Caco-2 (cell line): ENCODE measurements at regions of chr1 and their contacts with region 1.

Region 1: DNA sequence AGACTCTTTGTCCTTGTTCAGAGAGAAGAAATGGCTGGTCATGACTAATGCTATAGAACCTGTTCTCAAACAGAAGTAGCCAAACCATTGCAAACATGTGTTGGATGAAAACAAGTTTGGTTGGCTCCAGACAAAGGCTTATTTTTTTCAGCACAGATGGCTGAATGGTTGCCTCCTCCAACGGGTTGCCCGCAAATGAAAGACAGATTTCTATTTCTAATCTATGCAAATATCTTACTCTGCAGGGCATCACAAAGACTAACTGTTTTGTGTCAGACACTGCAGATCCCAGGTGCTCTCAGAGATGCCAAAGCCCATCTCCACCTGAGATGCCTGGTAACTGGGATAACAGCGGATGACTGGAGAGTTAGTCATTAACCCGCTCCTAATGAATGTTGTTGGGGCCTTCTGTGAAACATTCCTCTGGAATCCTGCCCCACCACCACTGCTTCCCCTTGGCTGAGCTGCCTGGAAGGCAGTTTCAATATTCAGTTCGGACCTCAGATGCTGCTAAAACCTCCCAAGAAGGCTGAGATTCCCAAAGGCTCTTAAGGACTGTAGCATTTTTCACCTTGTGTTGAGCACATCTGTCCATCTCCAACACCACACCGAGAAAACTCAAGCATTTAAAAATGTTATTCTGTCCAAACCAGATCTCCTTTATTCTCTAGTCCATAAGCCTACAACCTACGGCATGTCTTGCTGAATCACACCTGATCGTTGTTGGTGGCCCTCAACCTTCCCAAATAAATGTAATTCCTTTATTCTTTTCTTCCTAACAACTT is 104.4 kb downstream of the PTPN14 start:
- DNase-seq: peak; percentile 87 to 89
- H3K4me3 ChIP-seq: peak overlapping the region; percentile 23
- H3K4me3 Mint-ChIP-seq: peak overlapping the region; percentile 65
- H3K27ac Mint-ChIP-seq: peak overlapping the region; percentile 91
- H3K4me1 ChIP-seq: peaks cover 58% of the 10 kb centered on the region
- H3K4me1 Mint-ChIP-seq: peaks cover 44% of the 10 kb centered on the region
- H3K27me3 ChIP-seq: no peaks in the 10 kb centered on the region
- H3K27me3 Mint-ChIP-seq: no peaks in the 10 kb centered on the region
- CTCF ChIP-seq: no peak

Region 2: GRCh38 chr1:214404154-214404553 is 42.8 kb before region 1 on chr1:
- CTCF ChIA-PET with region 1: no interaction called
- POLR2A ChIA-PET with region 1: no interaction called
- intact Hi-C with region 1: loop called (anchors 1 kb)
- DNase-seq: no peak
- H3K4me3 ChIP-seq: no peak overlapping the region
- H3K4me3 Mint-ChIP-seq: peak overlapping the region; percentile 10
- H3K27ac Mint-ChIP-seq: peak overlapping the region; percentile 36
- H3K4me1 ChIP-seq: peaks cover 33% of the 10 kb centered on the region
- H3K4me1 Mint-ChIP-seq: peaks cover 15% of the 10 kb centered on the region
- H3K27me3 ChIP-seq: no peaks in the 10 kb centered on the region
- H3K27me3 Mint-ChIP-seq: no peaks in the 10 kb centered on the region
- CTCF ChIP-seq: no peak

Region 3: DNA sequence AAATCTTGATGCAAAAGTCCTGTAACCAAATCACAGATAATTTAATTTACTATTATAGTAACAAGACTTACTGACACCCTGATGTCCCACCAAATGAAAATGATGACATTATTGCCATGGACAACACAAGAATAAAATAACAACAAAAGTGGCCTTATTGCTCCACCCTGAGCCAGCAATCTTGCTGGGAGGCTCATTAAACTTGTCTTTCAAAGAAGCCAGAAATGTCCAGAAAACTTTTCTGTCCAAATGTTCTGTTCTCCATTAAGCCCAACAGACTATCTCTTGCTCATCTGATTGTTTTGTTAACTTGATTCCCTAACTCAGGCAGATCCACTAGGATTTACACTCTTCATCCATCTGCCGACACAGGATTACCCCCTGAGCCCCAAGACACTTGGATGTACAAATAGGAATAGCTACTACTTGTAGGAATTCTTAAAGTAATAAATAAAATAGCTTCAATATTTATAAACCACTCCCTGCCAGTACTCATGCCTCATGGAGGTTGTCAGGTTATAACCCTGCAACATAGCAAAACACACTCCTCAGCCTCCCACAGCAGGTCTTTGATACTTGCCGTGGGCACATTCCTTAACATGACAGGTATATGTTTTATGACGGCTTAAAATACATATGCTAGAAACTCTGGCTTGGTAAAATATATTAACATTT is 19.6 kb after region 1 on chr1:
- CTCF ChIA-PET with region 1: no interaction called
- POLR2A ChIA-PET with region 1: no interaction called
- intact Hi-C with region 1: loop called (anchors 2 kb)
- DNase-seq: peak in 1 of 2 experiments; percentile 33
- H3K4me3 ChIP-seq: no peak overlapping the region
- H3K4me3 Mint-ChIP-seq: peak overlapping the region; percentile 29
- H3K27ac Mint-ChIP-seq: peak overlapping the region; percentile 77
- H3K4me1 ChIP-seq: peaks cover 32% of the 10 kb centered on the region
- H3K4me1 Mint-ChIP-seq: peaks cover 57% of the 10 kb centered on the region
- H3K27me3 ChIP-seq: no peaks in the 10 kb centered on the region
- H3K27me3 Mint-ChIP-seq: no peaks in the 10 kb centered on the region
- CTCF ChIP-seq: no peak

Region 4: DNA sequence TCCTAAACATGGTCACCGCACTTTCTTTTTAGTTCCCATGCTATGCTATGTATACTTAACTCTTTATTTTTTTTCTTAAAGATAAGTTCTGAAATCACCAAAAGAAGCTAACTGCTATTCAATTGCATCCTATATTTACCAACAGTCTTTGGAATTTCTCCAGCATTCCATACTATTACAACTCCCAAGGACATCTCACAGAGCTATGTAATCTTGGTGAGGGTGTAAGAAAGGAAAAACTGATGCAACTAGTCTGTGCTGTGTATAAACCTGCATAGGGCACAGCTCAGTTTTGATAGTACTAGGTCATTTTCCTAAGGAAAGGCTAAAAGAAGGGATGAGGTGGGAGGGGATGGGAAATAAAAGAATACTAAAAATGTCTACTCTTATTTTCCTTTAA is 26.4 kb after region 1 on chr1:
- CTCF ChIA-PET with region 1: no interaction called
- POLR2A ChIA-PET with region 1: interaction called, 3 read pairs
- intact Hi-C with region 1: loop called (anchors 1 kb)
- DNase-seq: peak in 1 of 2 experiments; percentile 40
- H3K4me3 ChIP-seq: no peak overlapping the region
- H3K4me3 Mint-ChIP-seq: peak overlapping the region; percentile 31
- H3K27ac Mint-ChIP-seq: peak overlapping the region; percentile 80
- H3K4me1 ChIP-seq: peaks cover 82% of the 10 kb centered on the region
- H3K4me1 Mint-ChIP-seq: peaks cover 62% of the 10 kb centered on the region
- H3K27me3 ChIP-seq: no peaks in the 10 kb centered on the region
- H3K27me3 Mint-ChIP-seq: no peaks in the 10 kb centered on the region
- CTCF ChIP-seq: no peak

Region 5: DNA sequence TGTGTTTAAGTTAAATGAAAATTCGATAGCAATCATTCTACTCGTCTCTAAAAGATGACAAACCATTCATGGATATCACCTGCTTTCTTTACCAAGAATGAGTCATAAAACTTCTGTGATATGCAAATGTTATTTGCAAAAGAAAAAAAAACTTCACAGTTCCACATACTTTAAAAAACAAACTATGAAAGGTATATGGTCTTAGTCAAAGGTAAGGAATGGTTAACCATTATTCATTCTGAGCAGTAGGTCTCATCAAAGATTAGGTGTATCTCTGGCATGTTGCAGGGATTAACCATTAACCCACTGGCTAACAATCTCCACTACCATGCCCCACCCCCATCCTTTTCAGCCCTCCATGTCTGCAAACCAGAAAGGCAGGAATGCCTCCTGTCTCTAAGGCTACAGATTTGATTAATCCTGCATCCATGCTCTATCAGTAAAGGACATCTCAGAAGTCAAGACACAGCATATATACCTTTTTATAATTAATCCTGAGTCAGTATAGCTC is 60.1 kb after region 1 on chr1:
- CTCF ChIA-PET with region 1: no interaction called
- POLR2A ChIA-PET with region 1: no interaction called
- intact Hi-C with region 1: loop called (anchors 1 kb)
- DNase-seq: peak; percentile 97
- H3K4me3 ChIP-seq: peak overlapping the region; percentile 34
- H3K4me3 Mint-ChIP-seq: peak overlapping the region; percentile 65
- H3K27ac Mint-ChIP-seq: peak overlapping the region; percentile 92
- H3K4me1 ChIP-seq: peaks cover 59% of the 10 kb centered on the region
- H3K4me1 Mint-ChIP-seq: peaks cover 47% of the 10 kb centered on the region
- H3K27me3 ChIP-seq: no peaks in the 10 kb centered on the region
- H3K27me3 Mint-ChIP-seq: no peaks in the 10 kb centered on the region
- CTCF ChIP-seq: no peak

Region 6: GRCh38 chr1:214515544-214516429 is 68.8 kb after region 1 on chr1:
- CTCF ChIA-PET with region 1: no interaction called
- POLR2A ChIA-PET with region 1: no interaction called
- intact Hi-C with region 1: loop called (anchors 2 kb)
- DNase-seq: no peak
- H3K4me3 ChIP-seq: 0 out of 2 replicates have a peak overlapping the region, but pooled peaks have one; percentile 1
- H3K4me3 Mint-ChIP-seq: peak overlapping the region; percentile 75
- H3K27ac Mint-ChIP-seq: peak overlapping the region; percentile 91
- H3K4me1 ChIP-seq: peaks cover 65% of the 10 kb centered on the region
- H3K4me1 Mint-ChIP-seq: peaks cover 55% of the 10 kb centered on the region
- H3K27me3 ChIP-seq: no peaks in the 10 kb centered on the region
- H3K27me3 Mint-ChIP-seq: no peaks in the 10 kb centered on the region
- CTCF ChIP-seq: no peak